Activated naive CD4-positive, alpha-beta T cell treated with anti-CD3 and anti-CD28 coated beads for 36 hours (primary cell): ENCODE measurements at regions of chr6 and their contacts with region 1.

Region 1: GRCh38 chr6:125974214-125974866 is 12.0 kb upstream of the TRMT11 start:
- DNase-seq: no peak
- H3K4me3 Mint-ChIP-seq: no peak overlapping the region
- H3K27ac Mint-ChIP-seq: no peak overlapping the region
- H3K4me1 Mint-ChIP-seq: peaks cover 7% of the 10 kb centered on the region
- H3K27me3 Mint-ChIP-seq: no peaks in the 10 kb centered on the region

Region 2: DNA sequence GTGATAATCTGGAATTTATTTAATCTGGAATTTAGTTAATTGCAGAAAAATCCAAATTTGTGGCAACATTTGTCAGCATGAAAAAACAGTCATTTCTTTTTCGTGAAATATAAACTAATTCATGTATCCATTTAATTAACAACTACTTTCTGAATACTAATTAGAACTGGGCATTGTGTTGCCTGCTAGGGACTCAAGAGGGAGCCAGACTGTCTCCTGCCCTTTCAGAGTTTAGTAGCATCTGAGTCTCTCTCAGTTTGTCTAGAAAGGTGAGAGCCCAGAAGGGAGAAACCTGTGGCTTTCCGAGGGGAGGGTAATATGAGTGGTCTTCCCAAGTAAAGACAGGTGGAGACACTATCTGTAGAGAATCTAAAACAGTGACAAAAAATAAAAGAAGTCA is 461.7 kb before region 1 on chr6:
- CTCF ChIA-PET with region 1: no interaction called
- intact Hi-C with region 1: loop called (anchors 10 kb)
- DNase-seq: no peak
- H3K4me3 Mint-ChIP-seq: no peak overlapping the region
- H3K27ac Mint-ChIP-seq: no peak overlapping the region
- H3K4me1 Mint-ChIP-seq: no peaks in the 10 kb centered on the region
- H3K27me3 Mint-ChIP-seq: peaks cover 2% of the 10 kb centered on the region

Region 3: GRCh38 chr6:125858427-125859320 is 115.7 kb before region 1 on chr6:
- CTCF ChIA-PET with region 1: interaction called, 10 read pairs
- intact Hi-C with region 1: loop called (anchors 1 kb)
- DNase-seq: peak; percentile 57
- H3K4me3 Mint-ChIP-seq: no peak overlapping the region
- H3K27ac Mint-ChIP-seq: no peak overlapping the region
- H3K4me1 Mint-ChIP-seq: no peaks in the 10 kb centered on the region
- H3K27me3 Mint-ChIP-seq: no peaks in the 10 kb centered on the region

Region 4: GRCh38 chr6:125868678-125869402 is 105.5 kb before region 1 on chr6:
- CTCF ChIA-PET with region 1: no interaction called
- intact Hi-C with region 1: no loop called
- DNase-seq: no peak
- H3K4me3 Mint-ChIP-seq: no peak overlapping the region
- H3K27ac Mint-ChIP-seq: no peak overlapping the region
- H3K4me1 Mint-ChIP-seq: no peaks in the 10 kb centered on the region
- H3K27me3 Mint-ChIP-seq: no peaks in the 10 kb centered on the region

Region 5: DNA sequence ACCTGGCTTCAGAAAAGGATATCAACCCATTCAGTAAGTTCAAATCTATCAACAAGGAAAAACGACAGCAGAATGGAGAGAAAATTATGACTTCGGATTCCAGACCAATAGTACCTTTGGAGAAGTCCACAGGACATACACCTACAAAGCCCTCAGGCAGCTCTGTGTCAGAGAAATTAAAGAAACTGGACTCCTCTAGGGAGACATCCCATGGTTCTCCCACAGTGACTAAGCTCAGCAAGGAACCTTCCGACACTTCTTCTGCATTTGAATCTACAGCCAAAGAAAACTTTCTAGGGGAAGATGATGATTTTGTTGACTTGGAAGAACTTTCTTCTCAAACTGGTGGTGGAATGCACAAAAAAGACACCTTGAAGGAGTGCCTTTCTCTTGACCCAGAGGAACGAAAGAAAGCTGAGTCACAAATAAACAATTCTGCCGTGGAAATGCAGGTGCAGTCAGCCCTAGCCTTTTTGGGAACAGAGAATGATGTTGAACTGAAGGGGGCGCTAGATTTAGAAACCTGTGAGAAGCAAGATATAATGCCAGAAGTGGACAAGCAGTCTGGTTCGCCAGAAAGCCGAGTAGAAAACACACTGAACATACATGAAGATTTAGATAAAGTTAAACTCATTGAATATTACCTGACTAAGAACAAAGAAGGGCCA is 85.2 kb before region 1 on chr6:
- CTCF ChIA-PET with region 1: interaction called, 10 read pairs
- intact Hi-C with region 1: no loop called
- DNase-seq: peak; percentile 37
- H3K4me3 Mint-ChIP-seq: no peak overlapping the region
- H3K27ac Mint-ChIP-seq: no peak overlapping the region
- H3K4me1 Mint-ChIP-seq: no peaks in the 10 kb centered on the region
- H3K27me3 Mint-ChIP-seq: no peaks in the 10 kb centered on the region